ENCODE measurements at regions of chr6 and their contacts with region 1.

Region 1: GRCh38 chr6:56456786-56457185 is 185.9 kb downstream of the DST start:
- DNase-seq: no peak
- ATAC-seq: no peak
- H3K4me3 ChIP-seq: no peak overlapping the region
- H3K27ac ChIP-seq: no peak overlapping the region
- H3K4me1 ChIP-seq: no peaks in the 10 kb centered on the region
- H3K27me3 ChIP-seq: no peaks in the 10 kb centered on the region
- CTCF ChIP-seq: no peak

Region 2: GRCh38 chr6:56445818-56446217 is 11.0 kb before region 1 on chr6:
- CTCF ChIA-PET with region 1: no interaction called
- POLR2A ChIA-PET with region 1: interaction called, 14 read pairs
- in situ Hi-C with region 1: no loop called
- intact Hi-C with region 1: no loop called
- DNase-seq: no peak
- ATAC-seq: no peak
- H3K4me3 ChIP-seq: no peak overlapping the region
- H3K27ac ChIP-seq: no peak overlapping the region
- H3K4me1 ChIP-seq: no peaks in the 10 kb centered on the region
- H3K27me3 ChIP-seq: no peaks in the 10 kb centered on the region
- CTCF ChIP-seq: no peak